ENCODE measurements at regions of chr17 and their contacts with region 1.

Region 1: GRCh38 chr17:43755389-43755875 is 3.2 kb downstream of the SOST start:
- DNase-seq: peak in 1 of 4 donors; percentile 33
- ATAC-seq: peak; percentile 43
- H3K4me3 ChIP-seq: no peak overlapping the region
- H3K27ac ChIP-seq: no peak overlapping the region
- H3K4me1 ChIP-seq: peaks cover 14% of the 10 kb centered on the region
- H3K27me3 ChIP-seq: peaks cover 0 to 9% of the 10 kb centered on the region in 2 donors
- CTCF ChIP-seq: peak in 3 of 7 experiments; percentile 6 to 13 (median 12)
- POLR2A ChIP-seq: no peak

Region 2: GRCh38 chr17:43579566-43580140 is 175.8 kb before region 1 on chr17:
- intact Hi-C with region 1: loop called (anchors 10 kb)
- DNase-seq: no peak
- ATAC-seq: no peak
- H3K4me3 ChIP-seq: no peak overlapping the region
- H3K27ac ChIP-seq: no peak overlapping the region
- H3K4me1 ChIP-seq: peaks cover 6% of the 10 kb centered on the region
- H3K27me3 ChIP-seq: no peaks in the 10 kb centered on the region
- CTCF ChIP-seq: no peak
- POLR2A ChIP-seq: no peak

Region 3: DNA sequence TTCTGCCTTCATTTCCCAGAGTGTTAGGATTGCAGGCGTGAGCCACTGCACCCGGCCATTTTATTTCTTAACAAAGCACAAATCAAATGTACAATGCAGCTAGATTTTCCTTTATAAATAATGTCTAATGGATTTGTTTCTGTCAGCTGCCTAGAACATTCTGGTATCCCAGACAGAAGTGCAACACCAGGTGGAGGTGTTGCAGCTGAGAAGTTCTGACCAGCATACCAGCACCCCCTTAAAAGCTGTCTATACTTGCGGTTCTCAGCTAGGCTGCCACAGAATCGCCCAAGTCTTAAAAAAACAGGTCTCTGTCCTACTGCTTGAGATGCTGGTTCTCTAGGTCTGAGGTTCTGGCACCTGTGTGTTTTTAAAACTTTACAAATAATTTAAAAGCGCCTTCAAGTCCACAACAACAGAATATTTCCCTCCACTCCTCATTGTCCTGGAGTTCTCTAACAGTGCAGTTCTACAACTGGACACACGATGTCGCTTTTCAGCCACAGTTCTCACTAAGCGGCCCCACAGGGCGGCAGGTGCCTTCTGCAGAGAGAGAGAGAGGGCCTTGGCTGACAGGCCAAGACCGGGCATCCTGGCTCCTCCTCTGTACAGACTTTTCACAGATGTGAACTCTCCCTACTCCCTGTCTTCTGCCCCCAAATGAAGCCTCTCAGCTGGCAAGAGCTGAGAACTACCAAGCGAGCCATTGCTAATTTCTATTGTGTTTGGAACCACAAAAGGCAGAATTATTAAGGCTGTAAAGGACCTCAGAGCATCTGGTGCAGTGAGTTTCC is 61.2 kb before region 1 on chr17:
- intact Hi-C with region 1: loop called (anchors 2 kb)
- DNase-seq: peak; percentile 83 to 86 (median 84)
- ATAC-seq: peak; percentile 95
- H3K4me3 ChIP-seq: no peak overlapping the region
- H3K27ac ChIP-seq: no peak overlapping the region
- H3K4me1 ChIP-seq: peaks cover 9% of the 10 kb centered on the region
- H3K27me3 ChIP-seq: no peaks in the 10 kb centered on the region
- CTCF ChIP-seq: peak; percentile 86 to 97 (median 94)
- POLR2A ChIP-seq: no peak

Region 4: GRCh38 chr17:43917348-43918018 is 162.1 kb after region 1 on chr17:
- intact Hi-C with region 1: no loop called
- DNase-seq: peak in 2 of 4 donors; percentile 21 to 41
- ATAC-seq: no peak
- H3K4me3 ChIP-seq: no peak overlapping the region
- H3K27ac ChIP-seq: no peak overlapping the region
- H3K4me1 ChIP-seq: peaks cover 23% of the 10 kb centered on the region
- H3K27me3 ChIP-seq: no peaks in the 10 kb centered on the region
- CTCF ChIP-seq: peak in 5 of 7 experiments; percentile 12 to 35 (median 23)
- POLR2A ChIP-seq: no peak

Measured in body of pancreas (tissue), 4 donors.